Heart right ventricle (tissue), 16 donors: ENCODE measurements at regions of chr19 and their contacts with region 1.

Region 1: GRCh38 chr19:51777570-51778462 is 16.8 kb downstream of the FPR2 start:
- DNase-seq: peak; percentile 47 to 78
- ATAC-seq: peak; percentile 74 to 97 (median 94)
- H3K4me3 ChIP-seq: no peak overlapping the region
- H3K27ac ChIP-seq: no peak overlapping the region
- H3K4me1 ChIP-seq: peaks cover 0 to 33% (median 8%) of the 10 kb centered on the region in 9 donors
- H3K27me3 ChIP-seq: peaks cover 0 to 23% (median 3%) of the 10 kb centered on the region in 7 donors
- CTCF ChIP-seq: peak; percentile 64 to 81 (median 76)

Region 2: DNA sequence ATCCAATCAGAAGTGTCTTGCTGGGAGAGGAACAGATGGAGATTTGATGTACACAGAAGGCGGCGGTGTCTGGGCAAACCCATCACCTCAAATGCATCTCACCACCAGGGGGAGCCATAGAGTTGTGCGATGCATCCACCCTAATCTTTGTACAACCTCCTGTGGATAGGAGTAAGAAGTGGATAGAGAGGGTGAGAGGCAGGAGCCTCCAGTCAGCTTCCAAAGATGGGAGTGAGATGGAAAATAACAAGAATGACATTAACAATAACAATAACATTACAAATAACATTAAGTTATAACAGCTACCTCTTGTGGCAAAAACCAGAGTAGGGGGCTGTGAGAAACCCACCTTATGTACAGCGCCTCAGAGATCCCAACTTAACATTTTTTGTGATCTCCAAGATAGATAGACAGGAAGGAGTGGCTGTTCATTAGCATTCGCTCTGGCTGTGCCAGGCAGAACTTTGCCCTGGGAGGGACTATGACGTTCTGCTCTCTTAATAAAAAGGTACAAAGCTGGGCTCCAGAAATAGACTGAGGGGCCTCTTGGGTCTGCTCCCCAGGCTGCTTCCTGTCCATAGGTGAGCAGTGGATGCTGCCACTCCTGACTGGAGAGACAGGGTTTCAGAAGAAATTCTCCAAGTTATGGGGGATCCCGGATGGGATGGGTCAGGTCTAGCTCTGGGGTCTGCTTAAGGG is 304.7 kb before region 1 on chr19:
- intact Hi-C with region 1: loop called in 6 of 10 experiments (anchors 2 to 10 kb)
- DNase-seq: peak; percentile 50 to 79
- ATAC-seq: peak in 5 of 8 donors; percentile 62 to 79 (median 77)
- H3K4me3 ChIP-seq: no peak overlapping the region
- H3K27ac ChIP-seq: no peak overlapping the region
- H3K4me1 ChIP-seq: no peaks in the 10 kb centered on the region
- H3K27me3 ChIP-seq: peaks cover 0 to 73% (median 28%) of the 10 kb centered on the region in 7 donors
- CTCF ChIP-seq: peak; percentile 75 to 94 (median 89)

Region 3: DNA sequence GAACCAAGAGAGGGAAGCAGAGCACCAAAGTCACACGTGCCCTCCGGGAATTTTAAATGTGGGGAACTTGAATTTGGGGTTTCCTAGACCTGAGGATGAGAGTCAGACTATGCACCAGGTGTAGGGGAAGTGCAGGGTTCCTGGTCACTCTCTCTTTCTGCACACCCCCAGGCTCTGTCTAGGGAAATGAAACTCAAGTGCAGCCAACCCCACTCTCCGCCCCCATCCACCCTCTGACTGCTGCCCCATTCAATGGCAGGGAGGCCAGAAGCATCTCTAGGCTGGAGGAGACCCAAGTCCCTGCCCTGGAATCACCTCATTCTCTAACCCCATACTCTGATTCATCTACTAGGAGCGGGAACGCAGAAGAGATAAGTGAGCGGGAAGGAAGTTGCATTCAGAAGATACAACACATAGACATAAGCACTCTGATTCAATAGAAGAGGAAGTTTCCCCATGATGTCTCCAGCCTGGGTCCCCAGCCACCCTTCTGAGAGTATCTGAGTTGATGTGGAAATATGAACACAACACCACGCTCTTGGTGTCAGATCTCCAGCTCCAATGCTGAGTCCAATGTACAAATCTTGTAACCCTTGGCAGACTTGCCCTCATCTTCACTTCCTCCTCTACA is 126.5 kb before region 1 on chr19:
- intact Hi-C with region 1: loop called in 1 of 10 experiments (anchors 10 kb)
- DNase-seq: no peak
- ATAC-seq: peak in 2 of 8 donors; percentile 53 to 76
- H3K4me3 ChIP-seq: no peak overlapping the region
- H3K27ac ChIP-seq: peak overlapping the region in 1 of 10 donors; percentile 33
- H3K4me1 ChIP-seq: peaks cover 0 to 29% (median 0%) of the 10 kb centered on the region in 9 donors
- H3K27me3 ChIP-seq: peaks cover 0 to 29% (median 8%) of the 10 kb centered on the region in 7 donors
- CTCF ChIP-seq: no peak

Region 4: DNA sequence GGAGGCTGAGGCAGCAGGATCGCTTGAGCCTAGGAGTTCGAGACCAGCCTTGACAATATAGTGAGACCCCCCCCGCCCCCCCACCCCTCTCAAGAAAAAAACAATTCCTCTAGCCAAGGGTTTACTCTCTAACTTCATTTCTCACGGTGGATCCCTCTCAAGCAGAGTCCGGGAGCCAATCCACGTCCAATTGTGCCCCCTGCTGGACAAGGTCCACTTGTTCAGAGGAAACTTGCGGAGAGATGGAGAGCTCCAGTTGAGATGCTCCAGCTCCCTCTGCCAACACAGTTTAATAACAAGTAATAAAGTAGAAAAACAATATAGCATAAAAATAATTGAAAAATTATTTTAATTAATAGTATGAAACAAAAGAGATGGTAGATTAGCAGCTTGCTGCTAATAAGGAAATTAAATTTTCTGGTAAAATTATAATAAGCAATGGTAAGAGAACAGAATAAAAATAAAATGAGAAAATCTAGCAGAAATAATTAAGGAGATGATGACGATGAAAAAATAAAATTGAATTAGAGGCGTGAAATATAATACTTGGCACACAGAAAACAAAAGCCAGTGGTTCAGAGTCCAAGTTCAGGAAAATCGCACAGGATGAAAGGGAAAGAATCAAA is 116.7 kb before region 1 on chr19:
- intact Hi-C with region 1: loop called in 5 of 10 experiments (anchors 1 to 10 kb)
- DNase-seq: peak; percentile 49 to 81
- ATAC-seq: peak in 6 of 8 donors; percentile 58 to 78 (median 62)
- H3K4me3 ChIP-seq: no peak overlapping the region
- H3K27ac ChIP-seq: no peak overlapping the region
- H3K4me1 ChIP-seq: peaks cover 0 to 9% (median 0%) of the 10 kb centered on the region in 9 donors
- H3K27me3 ChIP-seq: peaks cover 0 to 55% (median 31%) of the 10 kb centered on the region in 7 donors
- CTCF ChIP-seq: peak; percentile 24 to 74 (median 66)

Region 5: DNA sequence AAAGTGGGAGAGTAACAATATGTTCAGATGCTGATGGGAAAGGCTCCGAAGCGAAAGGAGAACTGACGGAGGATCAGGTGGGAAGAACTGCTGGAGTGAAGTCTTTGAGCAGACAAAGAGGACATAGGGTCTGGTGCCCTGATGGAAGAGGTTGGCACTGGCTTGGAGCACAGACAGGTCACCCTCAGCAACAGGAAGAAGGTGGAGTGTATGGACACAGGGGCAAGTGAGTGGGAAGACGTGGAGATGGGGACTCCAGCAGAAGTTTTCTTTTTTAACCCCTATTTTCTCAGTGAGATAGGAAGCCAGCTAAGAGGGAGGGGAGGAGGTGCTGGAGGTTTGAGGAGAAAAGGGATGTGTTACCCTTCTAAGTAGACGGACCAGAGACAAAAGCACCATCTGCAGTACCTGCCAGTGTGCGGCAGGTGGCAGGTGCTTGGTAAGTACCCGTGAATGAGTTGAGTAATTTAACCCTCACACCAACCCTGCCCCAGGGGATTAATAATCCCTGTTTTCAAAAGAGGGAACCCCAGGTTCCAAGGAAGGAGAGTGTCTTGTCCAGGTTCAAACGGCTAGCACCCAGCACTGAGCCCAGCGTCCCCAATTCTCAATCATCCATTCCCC is 65.2 kb before region 1 on chr19:
- intact Hi-C with region 1: loop called in 1 of 10 experiments (anchors 2 kb)
- DNase-seq: no peak
- ATAC-seq: peak in 1 of 8 donors; percentile 13
- H3K4me3 ChIP-seq: no peak overlapping the region
- H3K27ac ChIP-seq: no peak overlapping the region
- H3K4me1 ChIP-seq: no peaks in the 10 kb centered on the region
- H3K27me3 ChIP-seq: peaks cover 0 to 22% (median 5%) of the 10 kb centered on the region in 7 donors
- CTCF ChIP-seq: peak in 7 of 9 donors; percentile 14 to 43 (median 35)

Region 6: DNA sequence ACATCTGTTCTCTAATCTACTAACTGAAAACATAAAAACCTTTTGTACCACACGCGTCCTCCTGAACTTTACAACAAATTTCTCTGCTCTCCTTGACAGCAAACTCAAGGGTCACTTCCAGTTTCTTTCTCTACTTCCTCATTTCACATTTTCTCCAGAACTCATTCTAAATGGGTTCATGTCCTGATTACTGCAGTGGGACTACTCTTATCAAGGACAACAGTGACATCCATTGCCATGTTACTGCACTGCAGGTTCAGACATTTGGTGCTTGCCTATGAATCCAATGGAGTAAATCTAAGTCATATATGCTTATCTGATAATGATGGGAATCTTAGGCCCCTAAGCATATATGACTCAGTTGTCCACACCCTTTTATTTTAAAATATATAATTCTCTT is 52.5 kb after region 1 on chr19:
- intact Hi-C with region 1: no loop called
- DNase-seq: no peak
- ATAC-seq: peak in 6 of 8 donors; percentile 41 to 71 (median 60)
- H3K4me3 ChIP-seq: no peak overlapping the region
- H3K27ac ChIP-seq: peak overlapping the region in 2 of 10 donors; percentile 6 to 79
- H3K4me1 ChIP-seq: peaks cover 0 to 20% (median 0%) of the 10 kb centered on the region in 9 donors
- H3K27me3 ChIP-seq: no peaks in the 10 kb centered on the region
- CTCF ChIP-seq: peak in 5 of 9 donors; percentile 25 to 51 (median 43)